PC-3 (cell line): ENCODE measurements at regions of chr2 and their contacts with region 1.

Region 1: GRCh38 chr2:128305159-128306087 is 13.2 kb downstream of the HS6ST1 start:
- DNase-seq: peak; percentile 93
- ATAC-seq: peak; percentile 59
- H3K4me3 ChIP-seq: peak overlapping the region; percentile 30
- H3K27ac ChIP-seq: peak overlapping the region; percentile 96
- H3K4me1 ChIP-seq: peaks cover 27% of the 10 kb centered on the region
- H3K27me3 ChIP-seq: no peaks in the 10 kb centered on the region
- CTCF ChIP-seq: no peak

Region 2: GRCh38 chr2:128027801-128028667 is 277.4 kb before region 1 on chr2 and contains the start of gene SAP130:
- CTCF ChIA-PET with region 1: no interaction called
- POLR2A ChIA-PET with region 1: no interaction called
- intact Hi-C with region 1: no loop called
- DNase-seq: peak; percentile 95
- ATAC-seq: peak; percentile 79
- H3K4me3 ChIP-seq: peak within 1 kb of the TSS; percentile 89
- H3K27ac ChIP-seq: peak within 1 kb of the TSS; percentile 52
- H3K4me1 ChIP-seq: 0 out of 2 replicates have a peak, but pooled peaks cover 11% of the 10 kb centered on the region
- H3K27me3 ChIP-seq: no peaks in the 10 kb centered on the region
- CTCF ChIP-seq: no peak
- total RNA-seq, gene SAP130: 11.1 and 13.0 TPM in 2 replicates

Region 3: GRCh38 chr2:128069769-128070168 is 235.7 kb before region 1 on chr2:
- CTCF ChIA-PET with region 1: no interaction called
- POLR2A ChIA-PET with region 1: no interaction called
- intact Hi-C with region 1: loop called (anchors 10 kb)
- DNase-seq: peak; percentile 81
- ATAC-seq: peak; percentile 91
- H3K4me3 ChIP-seq: no peak overlapping the region
- H3K27ac ChIP-seq: no peak overlapping the region
- H3K4me1 ChIP-seq: no peaks in the 10 kb centered on the region
- H3K27me3 ChIP-seq: no peaks in the 10 kb centered on the region
- CTCF ChIP-seq: no peak

Region 4: GRCh38 chr2:128172191-128172590 is 133.2 kb before region 1 on chr2:
- CTCF ChIA-PET with region 1: interaction called, 3 read pairs
- POLR2A ChIA-PET with region 1: no interaction called
- intact Hi-C with region 1: loop called (anchors 5 kb)
- DNase-seq: peak; percentile 30
- ATAC-seq: peak; percentile 67
- H3K4me3 ChIP-seq: no peak overlapping the region
- H3K27ac ChIP-seq: no peak overlapping the region
- H3K4me1 ChIP-seq: no peaks in the 10 kb centered on the region
- H3K27me3 ChIP-seq: no peaks in the 10 kb centered on the region
- CTCF ChIP-seq: peak; percentile 54

Region 5: DNA sequence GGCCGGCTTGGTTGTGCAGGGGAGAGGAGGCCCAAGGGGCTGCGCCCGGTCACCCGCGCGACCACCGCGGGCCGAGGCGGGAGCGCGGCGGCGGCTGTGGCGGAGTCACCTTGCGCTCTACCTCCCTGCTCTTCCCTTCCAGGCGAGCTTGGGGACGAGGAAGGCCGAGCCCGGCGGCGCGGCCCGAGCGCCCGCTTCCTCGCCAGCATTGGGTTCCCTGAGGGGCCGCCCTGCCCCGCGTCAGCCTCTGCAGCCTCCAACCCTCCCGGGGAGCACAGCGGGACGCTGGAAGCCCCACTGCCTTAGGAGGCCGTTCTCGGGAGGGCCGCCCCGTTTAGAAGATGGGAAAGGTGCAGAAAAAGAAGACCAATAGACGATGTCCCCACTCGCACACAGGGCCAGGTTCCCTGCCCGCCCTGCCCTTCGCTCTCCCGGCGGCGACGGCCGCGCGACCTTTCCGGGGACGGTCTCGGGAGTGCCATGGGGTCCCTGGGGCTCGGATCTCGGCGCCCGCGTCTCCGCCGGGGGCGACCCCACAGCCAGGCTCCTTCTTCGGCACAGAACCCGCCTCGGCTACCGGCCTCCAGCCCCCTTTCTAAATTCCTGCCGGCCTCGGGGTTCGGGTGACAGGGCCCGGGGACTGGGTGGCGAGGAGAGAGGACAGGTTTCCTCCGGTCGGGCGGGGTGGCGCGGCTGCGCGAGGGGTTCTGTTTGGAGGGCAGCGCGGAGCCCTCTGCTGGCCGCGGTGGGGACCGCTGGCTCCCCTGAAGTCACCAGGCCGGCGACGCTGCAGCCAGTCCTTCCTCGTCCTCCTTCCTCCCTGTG is 72.2 kb before region 1 on chr2:
- CTCF ChIA-PET with region 1: interaction called, 3 read pairs
- POLR2A ChIA-PET with region 1: no interaction called
- intact Hi-C with region 1: loop called (anchors 10 kb)
- DNase-seq: peak; percentile 74
- ATAC-seq: peak; percentile 85
- H3K4me3 ChIP-seq: peak overlapping the region; percentile 85
- H3K27ac ChIP-seq: no peak overlapping the region
- H3K4me1 ChIP-seq: peaks cover 22% of the 10 kb centered on the region
- H3K27me3 ChIP-seq: no peaks in the 10 kb centered on the region
- CTCF ChIP-seq: peak; percentile 85